Activated naive CD4-positive, alpha-beta T cell treated with anti-CD3 and anti-CD28 coated beads for 36 hours (primary cell): ENCODE measurements at regions of chr6 and their contacts with region 1.

Region 1: DNA sequence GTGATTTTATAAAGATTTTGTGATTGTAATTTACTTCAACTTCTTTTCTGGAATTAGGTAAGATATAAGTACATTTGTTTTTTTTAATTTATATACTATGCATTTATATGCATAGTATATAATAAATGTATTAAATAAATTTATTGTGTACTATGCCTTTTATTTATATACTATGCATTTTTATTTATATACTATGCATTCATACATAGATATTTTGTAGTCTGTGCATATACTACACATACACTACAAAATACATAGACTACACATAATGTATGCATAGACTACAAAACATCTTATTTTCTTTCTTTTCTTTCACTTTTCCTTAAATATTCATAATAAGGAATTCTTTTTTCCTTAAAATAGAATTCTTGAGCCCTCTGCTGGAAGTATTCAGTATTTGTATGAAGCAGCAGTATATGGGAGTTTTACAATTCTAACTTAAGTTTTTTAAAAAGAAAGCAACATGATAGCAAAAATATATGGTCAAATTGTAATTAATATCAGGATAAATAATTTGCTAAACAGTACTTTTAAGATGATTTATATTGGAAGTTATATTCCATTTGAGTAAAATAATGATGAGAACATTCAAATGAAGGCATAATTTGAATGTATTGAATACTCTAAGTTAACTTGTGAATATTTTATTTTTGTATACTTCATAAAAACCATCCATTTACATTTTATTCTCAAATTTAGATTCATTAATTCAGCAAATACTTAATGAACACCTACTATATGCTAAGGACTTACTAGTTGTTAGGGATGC is 129.3 kb downstream of the KLHL32 start:
- DNase-seq: no peak
- H3K4me3 Mint-ChIP-seq: no peak overlapping the region
- H3K27ac Mint-ChIP-seq: no peak overlapping the region
- H3K4me1 Mint-ChIP-seq: peaks cover 14% of the 10 kb centered on the region
- H3K27me3 Mint-ChIP-seq: no peaks in the 10 kb centered on the region

Region 2: GRCh38 chr6:95577304-95578105 is 1476.3 kb before region 1 on chr6 and contains the start of gene MANEA:
- CTCF ChIA-PET with region 1: no interaction called
- intact Hi-C with region 1: loop called (anchors 5 kb)
- DNase-seq: peak; percentile 80
- H3K4me3 Mint-ChIP-seq: peak within 1 kb of the TSS; percentile 96
- H3K27ac Mint-ChIP-seq: peak within 1 kb of the TSS; percentile 98
- H3K4me1 Mint-ChIP-seq: peaks cover 36% of the 10 kb centered on the region
- H3K27me3 Mint-ChIP-seq: no peaks in the 10 kb centered on the region
- total RNA-seq, gene MANEA: 14.0 to 16.0 TPM

Region 3: GRCh38 chr6:95959261-95959660 is 1094.6 kb before region 1 on chr6:
- CTCF ChIA-PET with region 1: no interaction called
- intact Hi-C with region 1: no loop called
- DNase-seq: no peak
- H3K4me3 Mint-ChIP-seq: no peak overlapping the region
- H3K27ac Mint-ChIP-seq: no peak overlapping the region
- H3K4me1 Mint-ChIP-seq: no peaks in the 10 kb centered on the region
- H3K27me3 Mint-ChIP-seq: no peaks in the 10 kb centered on the region

Region 4: GRCh38 chr6:96521644-96522464 is 532.0 kb before region 1 on chr6 and contains the start of gene UFL1:
- CTCF ChIA-PET with region 1: no interaction called
- intact Hi-C with region 1: loop called (anchors 2 kb)
- DNase-seq: peak; percentile 92
- H3K4me3 Mint-ChIP-seq: peak within 1 kb of the TSS; percentile 98
- H3K27ac Mint-ChIP-seq: peak within 1 kb of the TSS; percentile 99
- H3K4me1 Mint-ChIP-seq: peaks cover 13% of the 10 kb centered on the region
- H3K27me3 Mint-ChIP-seq: no peaks in the 10 kb centered on the region
- total RNA-seq, gene UFL1: 28.3 to 28.7 TPM

Region 5: DNA sequence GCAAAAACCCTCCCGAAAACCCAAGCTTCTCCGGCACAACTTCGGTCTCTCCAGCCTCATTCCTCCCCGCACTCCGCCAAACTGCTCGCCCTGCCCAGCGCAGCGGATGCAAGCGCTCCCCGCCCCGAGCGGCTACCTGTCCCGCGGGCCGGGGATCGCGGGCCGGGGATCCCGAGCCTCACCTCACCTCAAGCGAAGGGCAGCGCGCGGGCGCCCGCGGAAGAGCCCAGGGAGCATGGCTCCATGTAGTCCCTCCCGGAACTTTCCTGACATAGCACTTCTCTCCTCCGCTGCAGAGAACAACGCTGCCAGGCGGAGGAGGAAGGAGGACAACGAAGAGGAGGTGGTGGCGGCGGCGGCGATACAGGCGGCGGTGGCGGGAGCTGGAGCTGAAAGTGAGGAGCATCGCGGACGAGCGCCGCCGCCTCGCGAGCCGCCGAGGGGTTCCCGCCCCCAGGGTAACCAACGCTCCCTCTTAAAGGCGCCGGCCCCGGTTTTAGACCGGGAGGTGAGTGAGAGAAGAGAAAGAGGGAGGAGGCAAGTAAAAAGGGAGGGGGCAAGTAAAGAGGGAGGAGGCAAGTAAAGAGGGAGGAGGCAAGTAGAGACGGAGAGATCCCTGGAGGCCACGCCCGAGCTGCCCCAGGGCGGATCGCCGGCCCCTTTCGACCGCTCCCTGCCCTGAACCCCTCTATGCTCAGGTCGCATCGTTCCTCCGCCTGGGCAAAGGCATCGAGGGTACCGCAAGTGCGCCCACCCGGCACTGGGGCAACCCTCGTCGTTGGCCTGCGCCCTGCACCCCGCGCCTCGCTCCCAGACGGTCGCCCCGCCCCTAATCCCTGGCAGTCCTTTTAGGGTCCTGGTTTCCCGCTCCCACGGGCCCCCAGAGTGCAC is 216.5 kb before region 1 on chr6 and contains the start of gene GPR63:
- CTCF ChIA-PET with region 1: interaction called, 3 read pairs
- intact Hi-C with region 1: loop called (anchors 2 kb)
- DNase-seq: peak; percentile 75
- H3K4me3 Mint-ChIP-seq: peak within 1 kb of the TSS; percentile 82
- H3K27ac Mint-ChIP-seq: no peak within 1 kb of the TSS
- H3K4me1 Mint-ChIP-seq: peaks cover 10% of the 10 kb centered on the region
- H3K27me3 Mint-ChIP-seq: peaks cover 54% of the 10 kb centered on the region
- total RNA-seq, gene GPR63: 0.72 to 0.81 TPM

Region 6: DNA sequence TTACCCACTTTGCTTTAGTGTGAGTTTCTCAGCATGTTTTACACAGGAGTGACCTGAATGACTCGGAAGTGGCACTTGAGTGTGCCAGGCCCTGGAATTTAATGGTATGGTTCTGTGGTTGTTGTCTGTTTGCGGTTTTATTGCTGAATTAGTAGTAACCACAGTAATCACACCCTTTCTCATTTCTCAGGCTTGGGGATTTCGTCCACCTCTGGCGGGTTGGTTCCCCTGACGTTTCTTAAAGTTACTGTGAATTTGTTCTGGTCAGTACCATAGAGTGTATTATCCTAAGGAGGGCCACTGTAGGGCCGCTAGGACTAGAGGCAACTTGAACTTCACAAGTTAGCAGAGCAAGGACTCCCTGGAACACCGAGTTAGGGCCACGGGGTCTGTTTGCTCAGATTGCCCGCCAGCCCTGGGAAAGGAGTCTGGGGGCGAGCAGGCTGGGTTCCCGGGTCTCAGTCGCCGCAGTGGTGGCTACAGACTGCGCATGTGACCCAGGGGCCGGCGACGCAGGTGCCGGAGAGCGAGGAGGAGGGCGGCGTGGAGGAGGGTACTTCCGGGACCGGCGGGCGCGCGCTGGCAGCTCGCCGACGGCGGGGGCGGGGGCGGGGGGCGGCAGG is 129.8 kb before region 1 on chr6:
- CTCF ChIA-PET with region 1: no interaction called
- intact Hi-C with region 1: loop called (anchors 1 kb)
- DNase-seq: no peak
- H3K4me3 Mint-ChIP-seq: peak overlapping the region; percentile 90
- H3K27ac Mint-ChIP-seq: peak overlapping the region; percentile 75
- H3K4me1 Mint-ChIP-seq: peaks cover 37% of the 10 kb centered on the region
- H3K27me3 Mint-ChIP-seq: no peaks in the 10 kb centered on the region